ENCODE measurements at regions of chr4 and their contacts with region 1.

Region 1: GRCh38 chr4:183422967-183423631 is 21.3 kb upstream of the CDKN2AIP start:
- DNase-seq: peak; percentile 72
- H3K4me3 ChIP-seq: no peak overlapping the region
- H3K27ac ChIP-seq: no peak overlapping the region
- H3K4me1 ChIP-seq: peaks cover 19% of the 10 kb centered on the region
- H3K27me3 ChIP-seq: no peaks in the 10 kb centered on the region
- CTCF ChIP-seq: no peak

Region 2: DNA sequence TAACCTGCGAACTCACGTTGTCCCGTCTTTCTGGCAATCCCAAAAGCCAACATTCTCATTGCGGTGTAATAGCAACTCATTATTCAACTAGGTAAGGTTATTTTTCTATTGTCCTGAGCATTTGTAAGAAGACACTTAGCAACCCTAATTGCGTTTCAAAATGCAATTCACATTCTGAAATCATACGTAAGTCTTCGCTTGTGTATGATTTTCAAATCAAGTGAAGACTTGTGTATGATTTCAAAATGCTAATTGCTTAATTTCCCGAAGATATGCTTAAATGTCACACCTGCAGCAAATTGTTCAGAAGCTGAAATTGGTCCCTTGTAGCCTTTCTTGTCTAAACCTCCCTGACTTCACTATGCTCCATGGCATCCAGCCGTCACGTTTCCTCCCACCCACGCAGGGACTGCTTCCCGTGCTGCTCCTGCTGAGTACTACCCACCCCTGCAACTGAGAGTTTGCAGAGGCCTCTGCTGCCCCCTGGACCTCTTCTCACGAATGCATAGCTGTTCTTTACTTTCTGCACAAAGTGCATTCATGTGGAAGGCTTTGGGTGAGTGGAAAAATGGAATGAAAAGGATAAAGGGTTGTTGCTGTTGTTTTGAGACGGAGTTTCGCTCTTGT is 60.1 kb before region 1 on chr4:
- CTCF ChIA-PET with region 1: no interaction called
- dilution Hi-C with region 1: no loop called
- in situ Hi-C with region 1: no loop called
- intact Hi-C with region 1: no loop called
- DNase-seq: no peak
- H3K4me3 ChIP-seq: no peak overlapping the region
- H3K27ac ChIP-seq: no peak overlapping the region
- H3K4me1 ChIP-seq: no peaks in the 10 kb centered on the region
- H3K27me3 ChIP-seq: no peaks in the 10 kb centered on the region
- CTCF ChIP-seq: peak in 1 of 2 donors; percentile 14

Region 3: GRCh38 chr4:183444214-183445066 is 21.3 kb after region 1 on chr4 and contains the start of gene CDKN2AIP:
- CTCF ChIA-PET with region 1: no interaction called
- dilution Hi-C with region 1: no loop called
- in situ Hi-C with region 1: no loop called
- intact Hi-C with region 1: loop called (anchors 2 kb)
- DNase-seq: peak; percentile 97
- H3K4me3 ChIP-seq: peak within 1 kb of the TSS; percentile 58 to 95 (median 95)
- H3K27ac ChIP-seq: peak within 1 kb of the TSS; percentile 96
- H3K4me1 ChIP-seq: peaks cover 14% of the 10 kb centered on the region
- H3K27me3 ChIP-seq: no peaks in the 10 kb centered on the region
- CTCF ChIP-seq: peak in 1 of 2 donors; percentile 18
- total RNA-seq, gene CDKN2AIP: 12.7 to 14.3 TPM

Region 4: DNA sequence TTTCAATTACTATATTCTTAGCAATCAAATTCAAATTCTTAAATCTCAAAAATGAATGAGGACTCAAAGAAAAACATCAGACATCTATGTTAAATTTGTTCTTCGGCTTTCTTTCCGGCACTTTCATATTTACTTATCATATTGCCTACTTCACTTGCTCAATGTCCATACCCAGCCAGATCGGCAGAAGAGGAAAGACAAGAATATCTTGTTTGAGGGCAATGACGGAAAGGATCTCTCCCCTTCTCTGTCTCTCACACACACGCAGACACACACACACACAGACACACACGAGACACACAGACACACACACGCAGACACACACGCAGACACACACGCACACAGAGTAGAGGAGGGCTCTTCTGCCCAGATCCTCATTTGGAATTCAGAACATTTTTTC is 1064.4 kb after region 1 on chr4:
- CTCF ChIA-PET with region 1: no interaction called
- dilution Hi-C with region 1: no loop called
- in situ Hi-C with region 1: no loop called
- intact Hi-C with region 1: no loop called
- DNase-seq: no peak
- H3K4me3 ChIP-seq: no peak overlapping the region
- H3K27ac ChIP-seq: no peak overlapping the region
- H3K4me1 ChIP-seq: no peaks in the 10 kb centered on the region
- H3K27me3 ChIP-seq: no peaks in the 10 kb centered on the region
- CTCF ChIP-seq: no peak

Measured in mammary epithelial cell (primary cell).